WTC11 (cell line): ENCODE measurements at regions of chr14 and their contacts with region 1.

Region 1: DNA sequence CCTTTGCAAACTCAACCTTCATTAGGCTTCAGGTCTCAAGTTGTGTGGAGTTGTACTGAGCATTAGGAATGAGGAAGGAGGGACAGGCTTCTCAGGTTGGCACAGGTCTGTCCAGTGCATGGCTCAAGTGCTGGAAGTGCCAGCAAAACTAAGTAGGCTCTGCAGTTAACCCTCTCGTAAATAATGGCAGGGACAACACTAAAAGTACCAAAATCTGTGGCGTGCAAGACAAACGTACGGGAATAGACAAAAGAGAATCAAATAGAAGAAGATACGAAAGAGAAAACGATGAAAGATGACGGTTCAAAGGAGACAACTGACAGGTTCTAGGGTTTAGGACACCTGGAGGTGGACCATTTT is 612 bp downstream of the TRAPPC6B start:
- DNase-seq: no peak
- ATAC-seq: no peak
- H3K4me3 Mint-ChIP-seq: peak overlapping the region; percentile 89
- H3K27ac Mint-ChIP-seq: peak overlapping the region; percentile 92
- H3K4me1 Mint-ChIP-seq: peaks cover 26% of the 10 kb centered on the region
- H3K27me3 Mint-ChIP-seq: no peaks in the 10 kb centered on the region
- CTCF ChIP-seq: no peak

Region 2: DNA sequence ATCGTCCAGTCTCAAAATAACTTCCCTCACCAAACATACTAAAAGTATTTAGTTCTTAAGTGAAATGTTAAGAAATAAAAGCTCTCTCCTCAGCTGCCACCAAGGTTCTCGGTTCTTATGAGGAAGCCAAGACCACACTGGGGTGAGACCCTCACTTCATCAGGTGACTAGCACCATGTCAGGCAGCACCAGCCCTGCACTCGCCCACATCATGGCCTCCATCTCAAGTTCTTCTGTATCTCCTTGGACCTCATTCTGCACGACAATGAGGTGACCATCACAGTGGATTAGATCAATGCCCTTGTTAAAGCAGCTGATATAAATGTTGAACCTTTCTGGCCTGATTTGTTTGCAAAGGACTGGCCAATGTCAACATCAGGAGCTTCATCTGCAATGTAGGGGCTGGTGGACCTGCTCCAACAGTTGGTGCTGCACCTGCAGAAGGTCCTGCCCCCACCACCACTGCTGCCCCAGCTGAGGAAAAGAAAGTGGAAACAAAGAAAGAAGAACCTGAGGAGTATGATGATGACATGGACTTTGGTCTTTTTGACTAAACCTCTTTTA is 78.9 kb before region 1 on chr14:
- CTCF ChIA-PET with region 1: no interaction called
- POLR2A ChIA-PET with region 1: no interaction called
- DNase-seq: no peak
- ATAC-seq: no peak
- H3K4me3 Mint-ChIP-seq: no peak overlapping the region
- H3K27ac Mint-ChIP-seq: no peak overlapping the region
- H3K4me1 Mint-ChIP-seq: no peaks in the 10 kb centered on the region
- H3K27me3 Mint-ChIP-seq: no peaks in the 10 kb centered on the region; the same call in 1 of the 2 replicates
- CTCF ChIP-seq: no peak

Region 3: GRCh38 chr14:39266871-39267591 is 97.5 kb after region 1 on chr14:
- CTCF ChIA-PET with region 1: no interaction called
- POLR2A ChIA-PET with region 1: interaction called, 16 read pairs
- DNase-seq: peak; percentile 82
- ATAC-seq: peak; percentile 85
- H3K4me3 Mint-ChIP-seq: peak overlapping the region; percentile 91
- H3K27ac Mint-ChIP-seq: peak overlapping the region; percentile 94
- H3K4me1 Mint-ChIP-seq: peaks cover 29% of the 10 kb centered on the region
- H3K27me3 Mint-ChIP-seq: peaks cover 7% of the 10 kb centered on the region
- CTCF ChIP-seq: no peak